Ovary (tissue), 10 donors: ENCODE measurements at regions of chr10 and their contacts with region 1.

Region 1: GRCh38 chr10:15744217-15744865 is 24.6 kb upstream of the ITGA8 start:
- DNase-seq: peak in 1 of 5 donors; percentile 43
- H3K4me3 ChIP-seq: no peak overlapping the region
- H3K27ac ChIP-seq: no peak overlapping the region
- H3K4me1 ChIP-seq: peaks cover 5% of the 10 kb centered on the region
- H3K27me3 ChIP-seq: no peaks in the 10 kb centered on the region
- CTCF ChIP-seq: no peak
- EP300 ChIP-seq: no peak
- POLR2A ChIP-seq: no peak

Region 2: DNA sequence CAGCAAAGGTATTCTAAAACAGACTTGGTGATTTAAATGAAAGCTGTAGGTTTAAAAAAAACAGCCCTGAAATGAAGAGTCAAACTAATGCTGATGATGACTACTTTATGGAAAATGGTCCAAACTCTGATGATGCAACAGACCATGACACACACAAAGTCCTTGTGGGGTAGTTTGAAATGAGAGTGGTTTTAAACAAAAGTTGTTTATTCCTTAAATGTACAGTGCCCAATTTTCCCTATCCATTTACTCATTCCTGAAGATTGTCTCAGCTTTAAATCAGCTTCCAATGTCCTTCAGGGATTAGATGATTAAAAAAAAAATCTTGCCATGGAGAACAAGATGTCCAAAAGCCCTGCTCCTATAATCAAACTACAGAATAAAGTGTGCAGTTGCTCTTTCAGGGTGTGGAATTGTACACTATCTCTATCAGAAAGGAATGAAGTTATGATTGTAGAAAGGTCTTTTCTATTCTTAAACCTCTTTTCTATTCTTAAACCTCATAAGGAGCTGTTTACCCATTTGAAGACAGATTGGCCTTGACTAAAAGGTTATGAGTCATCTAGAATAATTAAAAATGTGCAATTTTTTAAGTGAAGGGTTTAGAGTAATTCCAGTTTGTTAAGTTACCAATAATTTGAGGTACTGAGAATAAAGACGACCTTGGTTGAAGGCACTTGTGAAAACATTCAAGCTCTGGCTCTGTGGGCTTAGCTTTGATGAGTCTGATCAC is 45.6 kb after region 1 on chr10:
- intact Hi-C with region 1: loop called in 1 of 4 experiments (anchors 10 kb)
- DNase-seq: peak in 1 of 5 donors; percentile 45
- H3K4me3 ChIP-seq: no peak overlapping the region
- H3K27ac ChIP-seq: peak overlapping the region in 1 of 2 donors; percentile 68
- H3K4me1 ChIP-seq: peaks cover 5% of the 10 kb centered on the region
- H3K27me3 ChIP-seq: no peaks in the 10 kb centered on the region
- CTCF ChIP-seq: no peak
- EP300 ChIP-seq: no peak
- POLR2A ChIP-seq: no peak

Region 3: DNA sequence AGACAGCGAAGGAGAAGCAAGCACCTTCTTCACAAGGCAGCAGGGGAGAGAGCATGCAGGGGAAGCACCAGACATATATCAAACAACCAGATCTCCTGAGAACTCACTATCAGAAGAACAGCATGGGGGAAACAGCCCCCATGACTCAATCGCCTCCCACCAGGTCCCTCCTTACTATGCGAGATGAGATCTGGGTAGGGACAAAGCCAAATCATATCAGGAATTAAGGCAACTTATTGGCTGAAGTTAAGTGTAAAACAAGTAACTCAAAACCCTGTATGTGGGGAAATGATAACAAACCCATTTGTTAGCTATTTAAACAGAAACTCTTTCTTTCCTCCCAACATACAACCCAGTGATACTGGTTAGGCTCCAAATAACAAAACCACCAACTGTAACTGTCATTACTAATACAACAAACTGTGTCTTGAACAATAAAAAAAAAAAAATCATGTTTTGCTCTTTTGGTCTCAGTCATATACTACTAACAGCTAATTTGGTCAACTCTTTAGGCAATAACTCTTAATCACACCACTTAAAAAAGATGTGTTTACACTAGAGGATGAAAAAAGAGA is 58.1 kb after region 1 on chr10:
- intact Hi-C with region 1: loop called in 2 of 4 experiments (anchors 2 to 10 kb)
- DNase-seq: no peak
- H3K4me3 ChIP-seq: no peak overlapping the region
- H3K27ac ChIP-seq: no peak overlapping the region
- H3K4me1 ChIP-seq: no peaks in the 10 kb centered on the region
- H3K27me3 ChIP-seq: no peaks in the 10 kb centered on the region
- CTCF ChIP-seq: no peak
- EP300 ChIP-seq: no peak
- POLR2A ChIP-seq: no peak

Region 4: GRCh38 chr10:17316488-17317170 is 1572.3 kb after region 1 on chr10:
- intact Hi-C with region 1: loop called in 1 of 4 experiments (anchors 5 kb)
- DNase-seq: no peak
- H3K4me3 ChIP-seq: no peak overlapping the region
- H3K27ac ChIP-seq: no peak overlapping the region
- H3K4me1 ChIP-seq: no peaks in the 10 kb centered on the region
- H3K27me3 ChIP-seq: no peaks in the 10 kb centered on the region
- CTCF ChIP-seq: no peak
- EP300 ChIP-seq: no peak
- POLR2A ChIP-seq: no peak